ENCODE measurements at regions of chr10 and their contacts with region 1.

Region 1: DNA sequence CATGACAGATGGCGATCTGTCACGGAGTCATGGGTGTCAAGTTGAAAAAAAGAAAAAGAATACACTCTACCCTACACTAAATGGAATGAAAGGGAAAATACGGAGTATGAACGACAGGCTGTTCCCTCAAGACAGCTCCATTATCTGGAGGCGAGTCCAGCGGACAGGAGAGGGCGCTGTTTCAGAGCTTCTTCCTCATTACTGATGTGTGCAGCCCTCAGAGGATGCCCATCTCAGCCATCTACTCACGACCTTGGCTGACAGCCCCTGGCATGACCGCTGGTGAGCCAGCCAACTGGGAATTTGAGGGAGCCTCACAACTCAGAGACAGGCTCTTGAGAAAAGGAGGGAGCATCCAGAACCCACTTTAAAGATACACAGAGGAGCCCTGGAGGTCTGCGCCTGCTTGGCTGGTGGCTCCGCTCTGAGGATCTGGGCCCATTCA is 49.6 kb upstream of the SMNDC1 start:
- DNase-seq: peak; percentile 93

Region 2: GRCh38 chr10:110300486-110300986 is 53.8 kb before region 1 on chr10:
- intact Hi-C with region 1: no loop called
- DNase-seq: no peak

Region 3: GRCh38 chr10:110474017-110474416 is 119.7 kb after region 1 on chr10:
- intact Hi-C with region 1: loop called in 1 of 2 experiments (anchors 1 kb)
- DNase-seq: no peak

Region 4: GRCh38 chr10:110535958-110536891 is 181.9 kb after region 1 on chr10:
- intact Hi-C with region 1: loop called in 1 of 2 experiments (anchors 10 kb)
- DNase-seq: no peak